OCI-LY7 (cell line): ENCODE measurements at regions of chr9 and their contacts with region 1.

Region 1: DNA sequence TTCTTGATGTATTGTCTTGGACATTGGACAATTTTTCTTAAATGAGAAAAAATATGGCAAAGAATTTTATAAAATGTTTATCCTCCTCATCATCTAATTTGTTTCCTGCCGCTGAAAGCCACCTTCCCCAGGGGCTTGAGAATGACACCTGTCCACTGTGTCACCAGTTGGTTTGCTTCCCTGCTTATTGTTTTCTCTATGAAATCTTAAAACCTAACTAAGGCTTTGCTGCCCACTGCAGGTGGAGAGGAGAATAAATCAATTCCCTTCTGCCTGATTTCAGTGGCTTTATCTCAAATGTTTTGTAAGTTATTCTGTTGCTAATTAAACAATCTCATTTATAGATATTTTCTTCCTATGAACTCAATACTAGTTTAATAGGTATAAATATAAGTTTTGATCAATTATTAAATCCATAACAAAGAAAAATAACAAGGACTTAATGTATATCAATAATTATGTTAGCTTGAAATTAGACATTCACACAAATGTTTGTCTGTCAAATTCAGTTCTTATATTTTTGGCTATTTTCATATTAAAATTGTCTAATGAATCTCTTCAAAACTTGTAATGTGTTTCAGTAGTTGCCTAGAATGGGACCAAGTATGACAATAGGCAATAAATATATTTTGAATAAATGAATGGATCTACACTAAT is 822.5 kb downstream of the PTPRD start:
- DNase-seq: peak; percentile 89
- H3K4me3 ChIP-seq: no peak overlapping the region
- H3K27ac ChIP-seq: peak overlapping the region; percentile 31
- H3K4me1 ChIP-seq: peaks cover 48% of the 10 kb centered on the region
- CTCF ChIP-seq: peak; percentile 98

Region 2: DNA sequence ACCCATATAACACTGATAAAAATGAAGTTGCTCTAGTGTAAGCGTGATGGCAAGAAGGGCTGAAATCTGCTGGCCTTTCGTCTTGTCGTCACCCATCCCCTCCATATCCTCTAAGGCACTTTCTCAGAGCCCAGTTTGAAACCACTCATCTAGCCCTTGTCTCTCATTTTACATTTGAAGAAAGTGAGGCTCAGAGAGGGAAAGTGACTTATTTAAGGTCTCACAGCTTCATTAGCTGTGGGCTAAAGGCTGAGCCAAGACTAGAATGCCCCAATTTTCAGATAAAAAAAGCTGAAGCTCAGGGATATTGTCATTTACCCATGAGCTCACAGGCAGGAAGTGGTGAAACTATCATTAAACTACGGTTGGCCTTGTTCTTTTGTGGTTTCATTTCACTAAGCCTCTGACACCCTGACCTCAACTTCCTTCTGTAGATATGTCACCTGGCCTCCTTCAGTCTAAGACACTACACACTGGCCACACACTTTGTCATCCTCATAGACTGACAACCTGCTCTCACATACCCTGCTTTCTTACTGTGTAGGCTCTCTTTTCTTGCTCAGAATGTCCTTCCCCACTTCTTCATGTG is 1814.1 kb before region 1 on chr9:
- CTCF ChIA-PET with region 1: no interaction called
- POLR2A ChIA-PET with region 1: no interaction called
- intact Hi-C with region 1: loop called (anchors 5 kb)
- DNase-seq: peak; percentile 94
- H3K4me3 ChIP-seq: peak overlapping the region; percentile 44
- H3K27ac ChIP-seq: peak overlapping the region; percentile 93
- H3K4me1 ChIP-seq: peaks cover 78% of the 10 kb centered on the region
- CTCF ChIP-seq: no peak

Region 3: DNA sequence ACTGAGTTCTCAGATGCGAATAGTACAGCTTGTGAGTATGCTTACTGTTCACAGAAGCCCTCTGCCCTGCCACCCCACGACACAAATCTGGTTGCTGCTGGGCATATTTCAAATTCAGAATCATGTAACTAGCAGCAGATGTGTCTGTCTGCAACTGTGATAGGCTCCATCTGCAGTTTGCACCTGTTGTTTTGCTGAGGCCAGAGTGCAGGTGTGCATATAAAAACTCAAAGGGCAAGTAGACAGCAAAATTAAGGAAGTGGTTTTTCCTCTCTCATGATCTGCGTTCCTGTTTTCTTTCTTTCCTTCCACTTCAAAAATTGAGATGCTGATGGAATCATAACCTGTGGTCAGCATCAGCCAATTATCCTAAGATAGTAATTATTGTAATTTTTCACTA is 178.1 kb before region 1 on chr9:
- CTCF ChIA-PET with region 1: interaction called, 36 read pairs
- POLR2A ChIA-PET with region 1: interaction called, 135 read pairs
- intact Hi-C with region 1: loop called (anchors 1 kb)
- DNase-seq: peak; percentile 95
- H3K4me3 ChIP-seq: no peak overlapping the region
- H3K27ac ChIP-seq: peak overlapping the region; percentile 82
- H3K4me1 ChIP-seq: peaks cover 53% of the 10 kb centered on the region
- CTCF ChIP-seq: no peak; the same call in 1 of the 2 replicates

Region 4: GRCh38 chr9:9904041-9904440 is 113.7 kb after region 1 on chr9:
- CTCF ChIA-PET with region 1: no interaction called
- POLR2A ChIA-PET with region 1: interaction called, 53 read pairs
- intact Hi-C with region 1: loop called (anchors 1 kb)
- DNase-seq: peak; percentile 38
- H3K4me3 ChIP-seq: peak overlapping the region; percentile 33
- H3K27ac ChIP-seq: peak overlapping the region; percentile 69
- H3K4me1 ChIP-seq: peaks cover 33% of the 10 kb centered on the region
- CTCF ChIP-seq: no peak

Region 5: GRCh38 chr9:9942764-9943424 is 152.6 kb after region 1 on chr9:
- CTCF ChIA-PET with region 1: interaction called, 11 read pairs
- POLR2A ChIA-PET with region 1: interaction called, 12 read pairs
- intact Hi-C with region 1: loop called (anchors 1 kb)
- DNase-seq: peak; percentile 57
- H3K4me3 ChIP-seq: no peak overlapping the region
- H3K27ac ChIP-seq: no peak overlapping the region
- H3K4me1 ChIP-seq: no peaks in the 10 kb centered on the region
- CTCF ChIP-seq: peak; percentile 98